H1 (cell line): ENCODE measurements at regions of chr2 and their contacts with region 1.

Region 1: GRCh38 chr2:160375802-160376469 is 117.7 kb downstream of the RBMS1 start:
- DNase-seq: no peak
- H3K4me3 ChIP-seq: no peak overlapping the region
- H3K27ac ChIP-seq: no peak overlapping the region
- H3K4me1 ChIP-seq: peaks cover 4 to 16% (median 14%) of the 10 kb centered on the region in 4 experiments; a peak in 6 of 7 replicates
- H3K27me3 ChIP-seq: no peaks in the 10 kb centered on the region
- CTCF ChIP-seq: no peak
- EP300 ChIP-seq: no peak
- POLR2A ChIP-seq: no peak
- RAD21 ChIP-seq: no peak

Region 2: DNA sequence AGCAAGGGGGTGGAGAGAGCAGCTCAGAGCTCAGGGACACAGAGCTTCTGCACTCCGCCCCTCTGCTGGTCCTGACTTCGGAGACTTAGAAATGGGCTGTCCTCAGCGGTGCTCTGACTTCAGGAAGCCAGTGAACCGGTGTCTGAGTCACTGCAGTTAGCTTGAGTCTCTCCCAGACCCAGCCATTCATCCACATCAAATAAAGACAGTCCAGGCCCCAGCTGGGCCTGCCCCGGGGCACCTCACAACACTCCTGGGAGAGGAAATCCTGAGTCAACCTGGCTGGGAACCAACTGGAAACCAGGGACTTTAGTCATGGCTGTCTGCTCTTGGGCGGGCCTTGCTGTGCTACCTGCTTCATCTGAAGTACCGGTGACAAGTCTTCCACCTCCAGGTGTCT is 170.4 kb before region 1 on chr2:
- CTCF ChIA-PET with region 1: no interaction called
- POLR2A ChIA-PET with region 1: no interaction called
- DNase-seq: no peak
- H3K4me3 ChIP-seq: no peak overlapping the region
- H3K27ac ChIP-seq: no peak overlapping the region
- H3K4me1 ChIP-seq: no peaks in the 10 kb centered on the region
- H3K27me3 ChIP-seq: no peaks in the 10 kb centered on the region
- CTCF ChIP-seq: no peak
- EP300 ChIP-seq: no peak
- POLR2A ChIP-seq: no peak
- RAD21 ChIP-seq: no peak

Region 3: GRCh38 chr2:160387558-160388262 is 11.8 kb after region 1 on chr2:
- CTCF ChIA-PET with region 1: interaction called, 14 read pairs
- POLR2A ChIA-PET with region 1: no interaction called
- DNase-seq: no peak
- H3K4me3 ChIP-seq: no peak overlapping the region
- H3K27ac ChIP-seq: no peak overlapping the region
- H3K4me1 ChIP-seq: peaks cover 10 to 22% (median 15%) of the 10 kb centered on the region in 4 experiments; a peak in 5 of 7 replicates
- H3K27me3 ChIP-seq: no peaks in the 10 kb centered on the region
- CTCF ChIP-seq: no peak
- EP300 ChIP-seq: no peak
- POLR2A ChIP-seq: no peak
- RAD21 ChIP-seq: no peak